ENCODE measurements at regions of chr6 and their contacts with region 1.

Region 1: DNA sequence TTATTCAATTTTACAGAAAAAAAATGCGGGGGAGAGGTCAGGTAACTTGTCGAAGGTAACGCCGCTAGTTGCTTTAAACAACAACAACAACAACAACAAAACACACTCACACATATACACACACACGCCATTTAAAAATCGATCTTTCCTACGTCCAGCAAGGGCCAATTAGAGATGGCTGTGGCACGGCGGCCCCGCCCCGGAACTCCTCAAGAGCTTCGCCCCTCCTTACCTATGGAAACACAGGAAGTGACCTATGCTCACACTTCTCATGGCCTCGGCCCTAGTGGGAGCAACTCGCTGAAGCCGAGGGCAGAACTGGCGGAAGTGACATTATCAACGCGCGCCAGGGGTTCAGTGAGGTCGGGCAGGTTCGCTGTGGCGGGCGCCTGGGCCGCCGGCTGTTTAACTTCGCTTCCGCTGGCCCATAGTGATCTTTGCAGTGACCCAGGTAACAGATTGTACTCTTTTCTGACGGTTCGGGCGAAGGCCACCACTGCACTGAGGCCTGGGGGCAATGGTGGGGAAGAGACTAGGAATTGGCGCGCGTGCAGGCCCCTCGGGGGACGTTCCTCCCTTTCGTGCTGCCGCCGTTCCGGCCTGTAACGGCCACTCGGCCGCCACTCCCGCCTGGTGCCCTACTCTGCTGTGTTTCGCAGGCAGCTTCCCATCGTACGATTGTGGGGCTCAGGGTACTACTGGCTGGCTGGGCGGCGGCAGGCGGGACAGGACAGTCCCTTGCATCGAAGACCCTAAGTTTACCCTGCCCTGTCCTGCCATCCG is at the start of gene TBP:
- DNase-seq: peak; percentile 99
- H3K4me3 Mint-ChIP-seq: no peak within 1 kb of the TSS
- H3K27ac Mint-ChIP-seq: no peak within 1 kb of the TSS
- H3K4me1 Mint-ChIP-seq: peaks cover 30% of the 10 kb centered on the region
- H3K27me3 Mint-ChIP-seq: no peaks in the 10 kb centered on the region
- CTCF ChIP-seq: no peak
- total RNA-seq, gene TBP: 15.8 and 20.7 TPM in 2 replicates

Region 2: DNA sequence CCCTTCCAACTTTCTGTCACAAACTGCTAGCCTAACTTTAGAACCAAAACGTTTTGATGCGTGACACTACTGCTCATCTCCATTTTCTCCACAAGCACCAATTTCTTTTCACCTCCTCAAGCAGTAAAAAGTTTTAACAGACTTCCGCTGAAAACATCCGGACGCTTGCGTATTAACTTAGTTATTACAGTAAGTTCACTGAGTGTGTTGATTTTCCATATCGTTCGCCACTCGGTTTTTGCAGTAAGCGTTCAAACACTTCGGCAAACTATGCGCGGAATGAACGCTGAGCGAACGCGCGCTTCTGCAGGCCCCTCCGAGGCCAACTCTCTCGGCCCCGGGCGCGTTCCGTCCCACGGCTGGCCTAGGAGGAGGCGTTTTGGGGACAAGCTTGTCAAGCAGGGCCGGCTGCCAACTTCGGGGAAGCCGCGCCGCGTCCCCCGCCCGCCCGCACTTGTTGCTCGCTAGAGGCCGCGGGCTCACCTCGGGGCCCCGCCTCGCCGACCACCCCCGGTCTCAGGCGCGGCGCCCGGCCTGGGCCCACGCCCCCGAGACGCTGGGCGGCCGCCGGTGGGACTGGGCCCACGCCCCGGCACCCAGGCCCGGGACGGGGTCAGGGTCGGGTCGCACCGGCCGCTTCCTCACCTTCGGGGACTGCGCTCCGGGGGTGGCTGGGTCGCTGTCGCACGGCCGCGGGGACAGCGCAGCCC is 830.8 kb before region 1 on chr6:
- CTCF ChIA-PET with region 1: no interaction called
- POLR2A ChIA-PET with region 1: interaction called, 27 read pairs
- intact Hi-C with region 1: no loop called
- DNase-seq: peak; percentile 56
- H3K4me3 Mint-ChIP-seq: peak overlapping the region; percentile 90
- H3K27ac Mint-ChIP-seq: peak overlapping the region; percentile 70
- H3K4me1 Mint-ChIP-seq: peaks cover 10% of the 10 kb centered on the region
- H3K27me3 Mint-ChIP-seq: no peaks in the 10 kb centered on the region
- CTCF ChIP-seq: no peak

Region 3: DNA sequence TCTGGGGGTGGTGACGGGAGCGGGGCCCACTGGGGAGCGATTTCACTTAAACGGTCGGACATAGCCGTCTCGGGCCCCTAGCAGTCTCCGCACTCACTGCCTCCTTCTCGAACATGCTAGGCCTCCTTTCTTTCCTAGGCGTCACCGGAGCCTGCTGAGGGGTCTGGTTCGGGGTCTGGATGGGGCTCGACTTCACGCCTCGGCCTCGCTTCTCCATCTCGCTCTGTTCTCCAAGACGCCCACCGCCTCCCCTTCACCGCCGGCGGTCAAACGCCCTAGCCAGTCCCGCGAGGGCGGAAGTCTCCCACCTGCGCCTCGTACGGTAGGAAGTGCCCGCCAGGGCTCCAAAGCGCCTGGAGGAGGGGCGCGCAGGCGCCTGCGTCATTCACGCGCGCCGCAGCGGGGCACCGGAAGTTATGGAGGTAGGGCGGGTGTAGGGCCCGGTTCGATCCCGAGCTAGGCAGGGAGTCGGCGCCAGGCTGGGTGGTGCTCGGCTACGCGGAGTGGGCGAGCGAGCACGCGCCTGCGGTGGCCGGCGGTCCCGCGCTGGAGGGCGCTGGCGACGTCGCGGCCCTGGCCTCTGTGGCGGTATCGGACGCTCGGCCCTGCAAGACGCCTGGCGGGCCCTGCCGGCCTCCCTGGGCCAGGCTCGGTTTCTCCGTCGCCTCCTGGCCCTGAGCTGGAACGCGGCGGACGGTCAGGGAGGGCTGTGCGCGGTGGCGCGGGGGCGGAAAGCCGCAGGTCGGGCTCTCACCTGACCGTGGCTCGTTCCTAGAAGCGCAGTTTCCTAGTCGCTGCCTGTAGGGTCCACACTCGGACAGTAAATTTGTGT is 802.7 kb before region 1 on chr6 and contains the starts of genes DYNLT2 and ERMARD:
- CTCF ChIA-PET with region 1: no interaction called
- POLR2A ChIA-PET with region 1: interaction called, 17 read pairs
- intact Hi-C with region 1: no loop called
- DNase-seq: peak; percentile 92
- H3K4me3 Mint-ChIP-seq: peak within 1 kb of the TSS; percentile 100
- H3K27ac Mint-ChIP-seq: peak within 1 kb of the TSS; percentile 100
- H3K4me1 Mint-ChIP-seq: peaks cover 17% of the 10 kb centered on the region
- H3K27me3 Mint-ChIP-seq: no peaks in the 10 kb centered on the region
- CTCF ChIP-seq: no peak
- total RNA-seq, gene DYNLT2: 0.79 and 1.3 TPM in 2 replicates
- total RNA-seq, gene ERMARD: 42.8 and 51.7 TPM in 2 replicates

Region 4: GRCh38 chr6:170260723-170261122 is 293.5 kb before region 1 on chr6:
- CTCF ChIA-PET with region 1: no interaction called
- POLR2A ChIA-PET with region 1: no interaction called
- intact Hi-C with region 1: no loop called
- DNase-seq: no peak
- H3K4me3 Mint-ChIP-seq: no peak overlapping the region
- H3K27ac Mint-ChIP-seq: no peak overlapping the region
- H3K4me1 Mint-ChIP-seq: no peaks in the 10 kb centered on the region
- H3K27me3 Mint-ChIP-seq: no peaks in the 10 kb centered on the region
- CTCF ChIP-seq: no peak

Region 5: GRCh38 chr6:170497845-170498301 is 56.3 kb before region 1 on chr6:
- CTCF ChIA-PET with region 1: no interaction called
- POLR2A ChIA-PET with region 1: no interaction called
- intact Hi-C with region 1: no loop called
- DNase-seq: no peak
- H3K4me3 Mint-ChIP-seq: no peak overlapping the region
- H3K27ac Mint-ChIP-seq: no peak overlapping the region
- H3K4me1 Mint-ChIP-seq: no peaks in the 10 kb centered on the region
- H3K27me3 Mint-ChIP-seq: peaks cover 72% of the 10 kb centered on the region
- CTCF ChIP-seq: no peak

Region 6: GRCh38 chr6:170529839-170530469 is 24.2 kb before region 1 on chr6:
- CTCF ChIA-PET with region 1: interaction called, 8 read pairs
- POLR2A ChIA-PET with region 1: interaction called, 17 read pairs
- intact Hi-C with region 1: no loop called
- DNase-seq: peak; percentile 84
- H3K4me3 Mint-ChIP-seq: no peak overlapping the region
- H3K27ac Mint-ChIP-seq: no peak overlapping the region
- H3K4me1 Mint-ChIP-seq: no peaks in the 10 kb centered on the region
- H3K27me3 Mint-ChIP-seq: no peaks in the 10 kb centered on the region
- CTCF ChIP-seq: peak; percentile 77

Region 7: DNA sequence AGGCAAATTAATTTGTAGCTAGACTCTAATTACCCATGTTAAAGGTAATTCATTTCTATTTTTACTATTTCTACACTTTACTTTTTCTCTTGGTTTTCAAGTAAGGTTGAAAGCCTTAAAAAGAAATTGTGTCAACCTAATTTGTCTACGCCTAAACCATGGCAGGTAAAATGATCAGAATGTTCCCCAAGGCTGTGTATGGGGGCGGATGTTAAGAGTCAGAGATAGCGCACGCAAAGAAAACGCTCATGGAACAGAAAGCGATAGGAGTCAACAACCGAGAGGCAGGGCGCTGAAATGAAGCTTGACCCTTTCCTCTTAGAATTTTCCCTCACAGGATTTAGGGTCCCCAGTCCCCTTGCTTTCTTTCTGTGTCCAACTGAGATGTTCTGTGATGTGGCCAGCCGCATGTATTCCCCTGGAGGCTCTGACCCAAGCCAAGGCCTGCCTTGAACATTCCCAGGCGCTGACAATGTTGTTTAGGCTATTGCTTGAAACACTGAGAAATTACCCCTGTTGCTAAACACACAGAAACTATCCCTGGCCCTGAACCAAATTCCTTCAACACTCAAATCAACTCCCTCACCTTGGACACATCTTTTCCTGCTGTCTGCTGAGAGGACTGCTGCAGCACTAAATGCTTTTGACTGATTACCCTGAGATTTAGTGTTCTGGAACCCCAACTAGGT is 12.0 kb before region 1 on chr6:
- CTCF ChIA-PET with region 1: interaction called, 4 read pairs
- POLR2A ChIA-PET with region 1: interaction called, 61 read pairs
- intact Hi-C with region 1: no loop called
- DNase-seq: no peak
- H3K4me3 Mint-ChIP-seq: no peak overlapping the region
- H3K27ac Mint-ChIP-seq: no peak overlapping the region
- H3K4me1 Mint-ChIP-seq: no peaks in the 10 kb centered on the region
- H3K27me3 Mint-ChIP-seq: no peaks in the 10 kb centered on the region
- CTCF ChIP-seq: no peak

Region 8: GRCh38 chr6:170575250-170575649 is 21.0 kb after region 1 on chr6:
- CTCF ChIA-PET with region 1: interaction called, 4 read pairs
- POLR2A ChIA-PET with region 1: interaction called, 23 read pairs
- intact Hi-C with region 1: no loop called
- DNase-seq: no peak
- H3K4me3 Mint-ChIP-seq: no peak overlapping the region
- H3K27ac Mint-ChIP-seq: no peak overlapping the region
- H3K4me1 Mint-ChIP-seq: no peaks in the 10 kb centered on the region
- H3K27me3 Mint-ChIP-seq: no peaks in the 10 kb centered on the region
- CTCF ChIP-seq: peak; percentile 21

Region 9: DNA sequence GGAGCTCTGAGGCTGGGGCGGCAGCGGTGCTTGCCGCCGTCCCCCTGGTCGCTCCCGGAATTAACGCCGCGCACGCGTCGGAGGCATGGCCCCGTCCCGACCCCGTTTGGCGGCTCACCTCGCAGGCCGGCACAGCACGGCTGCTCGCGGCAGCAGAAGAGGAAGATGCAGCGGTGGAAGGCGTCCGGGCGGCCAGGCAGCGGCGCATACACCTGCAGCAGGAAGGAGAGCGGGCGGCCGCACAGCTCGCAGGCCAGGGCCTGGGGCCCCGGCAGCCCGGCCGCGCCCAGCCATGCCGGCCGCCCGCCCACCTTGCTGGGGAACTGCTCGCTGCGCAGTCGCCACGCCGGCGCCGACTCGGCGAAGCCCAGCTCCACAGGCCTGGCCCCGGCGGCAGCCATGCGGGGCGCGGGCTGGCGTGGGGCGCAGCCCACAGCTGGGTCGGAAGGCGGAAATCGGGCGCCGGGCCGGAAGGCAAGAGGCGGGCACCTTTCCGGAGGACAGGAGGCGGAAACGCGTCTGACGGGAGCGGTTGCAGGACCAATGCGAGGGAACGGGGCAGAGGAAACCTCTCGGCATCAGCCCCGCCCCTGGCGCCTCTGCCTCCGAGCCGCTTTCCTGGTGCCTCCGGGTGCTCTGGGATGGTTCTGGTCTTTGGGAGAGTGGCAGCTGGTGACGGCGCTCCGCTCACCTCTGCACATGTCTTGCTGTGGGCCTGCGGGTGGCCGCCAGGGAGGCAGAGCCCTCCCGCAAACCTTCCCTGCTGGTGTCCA is 30.2 kb after region 1 on chr6 and contains the start of gene PDCD2:
- CTCF ChIA-PET with region 1: interaction called, 5 read pairs
- POLR2A ChIA-PET with region 1: interaction called, 78 read pairs
- intact Hi-C with region 1: no loop called
- DNase-seq: peak; percentile 92
- H3K4me3 Mint-ChIP-seq: peak within 1 kb of the TSS; percentile 99
- H3K27ac Mint-ChIP-seq: peak within 1 kb of the TSS; percentile 81
- H3K4me1 Mint-ChIP-seq: peaks cover 6% of the 10 kb centered on the region
- H3K27me3 Mint-ChIP-seq: no peaks in the 10 kb centered on the region
- CTCF ChIP-seq: no peak
- total RNA-seq, gene PDCD2: 91.7 and 101 TPM in 2 replicates

Measured in MCF 10A (cell line).